ENCODE measurements at regions of chr3 and their contacts with region 1.

Region 1: GRCh38 chr3:167125612-167126407 is 254.3 kb downstream of the ZBBX start:
- DNase-seq: peak; percentile 27
- ATAC-seq: peak; percentile 60
- H3K4me3 ChIP-seq: no peak overlapping the region
- H3K27ac ChIP-seq: no peak overlapping the region
- H3K4me1 ChIP-seq: peaks cover 13% of the 10 kb centered on the region
- H3K27me3 ChIP-seq: no peaks in the 10 kb centered on the region
- CTCF ChIP-seq: no peak

Region 2: DNA sequence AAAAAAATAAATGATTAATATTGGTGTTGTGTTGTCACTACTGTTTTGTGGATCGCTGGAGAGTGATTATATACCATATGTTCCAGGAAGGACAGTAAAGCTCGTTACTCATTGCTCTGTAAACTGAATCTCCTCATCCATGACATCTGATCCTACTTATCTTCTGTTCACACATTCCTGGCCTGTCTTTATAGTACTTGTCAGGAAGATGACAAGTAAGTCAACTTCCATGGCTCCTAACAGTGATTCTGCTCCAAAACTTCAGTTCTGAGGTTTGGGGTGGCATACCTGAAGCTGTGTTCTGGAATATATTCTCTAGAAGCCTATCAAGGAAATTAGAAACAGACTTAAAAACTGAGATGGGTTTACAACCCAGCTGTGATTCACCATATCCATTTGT is 34.6 kb before region 1 on chr3:
- CTCF ChIA-PET with region 1: no interaction called
- POLR2A ChIA-PET with region 1: no interaction called
- intact Hi-C with region 1: loop called (anchors 1 kb)
- DNase-seq: peak; percentile 66
- ATAC-seq: peak; percentile 84
- H3K4me3 ChIP-seq: no peak overlapping the region
- H3K27ac ChIP-seq: no peak overlapping the region
- H3K4me1 ChIP-seq: peaks cover 12% of the 10 kb centered on the region
- H3K27me3 ChIP-seq: no peaks in the 10 kb centered on the region
- CTCF ChIP-seq: no peak

Region 3: DNA sequence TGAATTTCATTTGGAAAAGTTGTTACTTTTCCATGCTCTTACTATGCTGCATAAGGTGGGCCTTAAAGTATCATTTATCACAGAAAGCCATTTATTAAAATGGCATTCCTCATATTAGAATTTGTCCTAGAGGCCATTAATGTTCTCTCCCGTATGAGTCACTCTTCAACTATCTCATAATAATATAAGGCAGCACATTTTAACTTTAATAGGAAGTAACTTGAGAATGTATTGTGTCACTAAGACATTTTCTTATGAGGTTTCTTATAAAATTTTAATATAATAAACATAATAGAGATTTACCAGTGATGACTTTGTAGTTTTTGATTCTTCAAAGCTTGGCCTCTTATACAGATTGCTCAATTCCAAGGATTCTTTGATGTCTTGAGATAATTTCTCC is 179.5 kb after region 1 on chr3:
- CTCF ChIA-PET with region 1: no interaction called
- POLR2A ChIA-PET with region 1: no interaction called
- intact Hi-C with region 1: loop called (anchors 5 kb)
- DNase-seq: peak; percentile 47
- ATAC-seq: peak; percentile 77
- H3K4me3 ChIP-seq: no peak overlapping the region
- H3K27ac ChIP-seq: no peak overlapping the region
- H3K4me1 ChIP-seq: peaks cover 20% of the 10 kb centered on the region; the same call in 1 of the 2 replicates
- H3K27me3 ChIP-seq: no peaks in the 10 kb centered on the region
- CTCF ChIP-seq: no peak

Measured in PC-3 (cell line).